HCT116 (cell line): ENCODE measurements at regions of chr9 and their contacts with region 1.

Region 1: DNA sequence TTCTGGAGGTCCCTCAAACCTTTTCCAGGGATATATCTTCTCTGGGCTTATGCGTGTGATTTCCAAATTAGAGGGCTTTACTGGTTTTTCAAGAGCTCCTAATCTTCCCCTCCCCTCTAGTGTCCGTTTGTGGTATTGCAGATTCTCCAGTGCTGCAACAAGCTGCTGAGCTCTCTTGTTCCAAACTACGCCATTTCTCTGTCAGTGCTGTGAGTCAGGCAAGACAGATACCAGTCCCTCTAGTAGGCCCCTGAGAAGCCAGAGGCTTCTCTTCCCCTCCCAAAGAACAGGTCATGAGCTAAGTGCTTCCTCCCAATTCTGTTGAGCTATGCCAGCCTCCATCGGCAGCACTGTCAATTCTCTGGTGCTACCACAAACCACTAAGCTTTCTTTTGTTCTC is 149.5 kb downstream of the FANCC start:
- DNase-seq: peak; percentile 61
- ATAC-seq: peak; percentile 74
- H3K4me3 ChIP-seq: no peak overlapping the region
- H3K27ac ChIP-seq: no peak overlapping the region
- H3K4me1 ChIP-seq: no peaks in the 10 kb centered on the region
- H3K27me3 ChIP-seq: no peaks in the 10 kb centered on the region
- CTCF ChIP-seq: peak; percentile 52 to 85 (median 84)
- POLR2A ChIP-seq: no peak
- RAD21 ChIP-seq: peak; percentile 68

Region 2: DNA sequence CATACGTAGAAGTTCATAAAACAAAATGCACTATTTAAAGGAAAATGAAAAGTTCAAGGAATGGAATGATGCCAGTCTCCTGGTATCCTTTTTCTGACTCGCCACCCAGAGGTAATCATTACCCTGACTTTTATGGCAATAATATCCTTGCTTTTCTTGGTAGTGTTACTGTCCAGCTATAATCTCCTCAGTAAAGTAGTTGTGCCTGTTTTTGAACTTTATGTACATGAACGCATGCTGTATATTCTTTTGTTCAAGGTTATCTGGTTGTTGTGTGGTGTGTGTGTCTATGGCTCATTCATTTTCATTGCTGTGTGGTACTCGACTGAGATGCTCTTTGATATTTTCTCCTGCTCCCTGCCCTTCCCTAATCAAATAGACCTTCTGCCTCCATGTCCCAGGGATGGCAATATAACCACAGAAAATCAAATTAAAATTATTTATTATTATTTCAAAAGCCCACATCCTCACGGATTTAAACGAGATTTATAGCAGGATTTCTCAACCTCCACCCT is 499.5 kb before region 1 on chr9:
- CTCF ChIA-PET with region 1: interaction called, 11 read pairs
- POLR2A ChIA-PET with region 1: no interaction called
- RAD21 ChIA-PET with region 1: interaction called in 1 of 2 experiments, 5 read pairs
- intact Hi-C with region 1: no loop called
- DNase-seq: no peak
- ATAC-seq: peak; percentile 37
- H3K4me3 ChIP-seq: peak overlapping the region; percentile 41 to 70; a peak in 2 of 4 replicates
- H3K27ac ChIP-seq: no peak overlapping the region
- H3K4me1 ChIP-seq: peaks cover 5 to 17% of the 10 kb centered on the region in 2 experiments
- H3K27me3 ChIP-seq: no peaks in the 10 kb centered on the region
- CTCF ChIP-seq: no peak
- POLR2A ChIP-seq: no peak
- RAD21 ChIP-seq: no peak

Region 3: GRCh38 chr9:94681508-94681907 is 486.5 kb before region 1 on chr9:
- CTCF ChIA-PET with region 1: interaction called, 17 read pairs
- POLR2A ChIA-PET with region 1: no interaction called
- RAD21 ChIA-PET with region 1: interaction called, 3 to 5 read pairs
- intact Hi-C with region 1: loop called (anchors 2 kb)
- DNase-seq: peak; percentile 54
- ATAC-seq: peak; percentile 99
- H3K4me3 ChIP-seq: no peak overlapping the region
- H3K27ac ChIP-seq: no peak overlapping the region
- H3K4me1 ChIP-seq: no peaks in the 10 kb centered on the region
- H3K27me3 ChIP-seq: peaks cover 16% of the 10 kb centered on the region; the same call in 1 of the 2 replicates
- CTCF ChIP-seq: peak; percentile 57 to 77 (median 76)
- POLR2A ChIP-seq: no peak
- RAD21 ChIP-seq: peak; percentile 90

Region 4: GRCh38 chr9:94952565-94953373 is 215.2 kb before region 1 on chr9:
- CTCF ChIA-PET with region 1: no interaction called
- POLR2A ChIA-PET with region 1: no interaction called
- RAD21 ChIA-PET with region 1: no interaction called
- intact Hi-C with region 1: no loop called
- DNase-seq: no peak
- ATAC-seq: no peak
- H3K4me3 ChIP-seq: no peak overlapping the region
- H3K27ac ChIP-seq: no peak overlapping the region
- H3K4me1 ChIP-seq: peaks cover 20 to 27% of the 10 kb centered on the region in 2 experiments
- H3K27me3 ChIP-seq: no peaks in the 10 kb centered on the region
- CTCF ChIP-seq: no peak
- POLR2A ChIP-seq: no peak
- RAD21 ChIP-seq: no peak

Region 5: GRCh38 chr9:95181226-95181818 is 13.3 kb after region 1 on chr9:
- CTCF ChIA-PET with region 1: interaction called, 28 read pairs
- POLR2A ChIA-PET with region 1: no interaction called
- RAD21 ChIA-PET with region 1: no interaction called
- intact Hi-C with region 1: no loop called
- DNase-seq: peak; percentile 4
- ATAC-seq: no peak
- H3K4me3 ChIP-seq: no peak overlapping the region
- H3K27ac ChIP-seq: no peak overlapping the region
- H3K4me1 ChIP-seq: no peaks in the 10 kb centered on the region
- H3K27me3 ChIP-seq: no peaks in the 10 kb centered on the region
- CTCF ChIP-seq: peak; percentile 20 to 61 (median 22); a peak in 4 of 6 replicates
- POLR2A ChIP-seq: no peak
- RAD21 ChIP-seq: peak; percentile 9; the same call in 1 of the 2 replicates